Upper lobe of right lung (tissue), 1 donor: ENCODE measurements at regions of chr19 and their contacts with region 1.

Region 1: DNA sequence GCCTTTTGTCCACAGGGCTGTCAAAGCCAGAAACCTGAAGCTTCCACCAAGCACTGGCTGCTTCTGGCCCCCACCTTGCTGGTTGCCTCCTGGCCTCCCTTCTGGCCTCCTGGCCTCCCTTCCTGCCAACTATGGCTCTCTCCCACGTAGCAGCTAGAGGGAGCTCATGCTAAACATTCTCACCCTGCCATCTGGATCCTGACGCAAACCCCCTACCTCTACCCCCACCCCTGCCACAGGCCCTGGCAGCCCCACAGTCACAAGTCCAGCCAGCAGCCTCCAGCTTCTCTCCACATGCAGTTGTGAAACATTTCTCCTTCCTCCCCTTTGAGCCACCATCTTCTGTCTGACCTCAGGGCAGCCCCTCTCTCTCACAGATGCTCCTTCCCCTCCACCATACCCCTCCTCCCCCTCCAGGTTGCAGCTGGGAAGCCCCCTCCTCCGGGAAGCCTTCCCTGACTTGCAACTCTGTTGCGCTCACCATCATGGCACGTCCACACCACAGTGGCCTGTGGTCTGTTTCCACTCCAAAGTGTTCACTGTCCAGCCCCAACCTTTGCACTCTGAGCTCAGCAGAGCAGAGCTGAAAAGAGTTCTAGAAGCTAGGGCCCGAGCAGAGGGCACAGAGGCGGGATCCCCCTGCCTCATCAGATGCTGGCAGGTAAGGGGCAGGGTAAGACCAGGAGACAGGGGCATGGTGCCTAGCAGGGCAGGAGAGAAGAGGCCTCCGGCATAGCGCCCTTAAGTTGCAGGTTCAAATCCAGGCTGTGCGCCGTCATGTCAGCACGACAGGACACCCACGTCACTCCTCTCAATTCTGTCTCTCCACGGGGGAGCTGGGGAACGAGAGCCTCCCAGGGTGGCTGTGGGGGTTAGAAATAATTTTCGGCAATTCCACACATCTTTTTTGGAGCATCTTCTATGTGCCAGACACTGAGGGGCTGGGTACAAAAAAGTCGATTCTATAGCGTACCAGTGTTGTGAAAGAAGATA is 7.3 kb downstream of the ADGRL1 start:
- DNase-seq: no peak
- ATAC-seq: no peak
- H3K4me3 ChIP-seq: no peak overlapping the region
- H3K27ac ChIP-seq: no peak overlapping the region
- H3K4me1 ChIP-seq: no peaks in the 10 kb centered on the region
- H3K27me3 ChIP-seq: no peaks in the 10 kb centered on the region
- CTCF ChIP-seq: no peak

Region 2: DNA sequence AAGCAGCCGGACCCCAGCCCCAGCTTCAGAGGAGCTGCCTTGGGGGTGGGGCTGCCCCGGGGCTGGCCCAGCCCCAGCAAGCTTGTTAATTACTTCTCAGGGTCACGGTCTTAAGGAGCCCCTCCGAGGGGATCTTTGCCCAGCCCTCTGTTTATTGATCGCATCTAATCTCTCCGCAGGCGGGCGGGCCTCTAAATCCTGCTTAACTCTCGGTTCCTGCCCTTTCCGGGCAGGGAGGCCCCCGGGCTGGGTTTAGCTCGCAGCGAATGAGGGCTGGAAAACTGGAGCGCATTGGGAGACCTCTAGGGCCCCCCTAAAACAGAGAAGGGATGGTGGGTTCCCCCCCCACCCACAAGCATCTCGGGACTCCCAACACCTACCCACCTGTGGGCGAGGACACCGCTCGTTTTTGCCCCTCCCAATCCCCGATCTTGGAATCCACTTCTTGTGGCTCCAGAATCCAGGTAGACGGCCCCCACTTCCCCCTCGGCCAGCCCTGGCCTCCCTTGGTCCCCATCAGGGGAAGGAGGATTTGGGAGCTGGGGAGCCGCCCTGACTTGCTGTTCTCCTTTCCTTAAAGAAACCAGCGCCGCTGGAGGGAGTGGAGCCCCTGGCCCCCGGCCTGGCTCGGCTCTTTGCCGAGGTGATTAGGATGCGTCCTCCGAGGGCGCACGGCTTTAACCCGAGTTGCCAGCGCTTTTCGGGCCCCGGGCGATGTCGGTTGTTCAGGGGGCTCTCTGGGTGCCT is 66.8 kb after region 1 on chr19:
- intact Hi-C with region 1: no loop called
- DNase-seq: no peak
- ATAC-seq: no peak
- H3K4me3 ChIP-seq: no peak overlapping the region
- H3K27ac ChIP-seq: no peak overlapping the region
- H3K4me1 ChIP-seq: no peaks in the 10 kb centered on the region
- H3K27me3 ChIP-seq: peaks cover 30% of the 10 kb centered on the region
- CTCF ChIP-seq: no peak

Region 3: GRCh38 chr19:14337510-14337909 is 138.8 kb after region 1 on chr19:
- intact Hi-C with region 1: loop called (anchors 10 kb)
- DNase-seq: no peak
- ATAC-seq: peak; percentile 68
- H3K4me3 ChIP-seq: no peak overlapping the region
- H3K27ac ChIP-seq: no peak overlapping the region
- H3K4me1 ChIP-seq: no peaks in the 10 kb centered on the region
- H3K27me3 ChIP-seq: no peaks in the 10 kb centered on the region
- CTCF ChIP-seq: no peak